ENCODE measurements at regions of chr14 and their contacts with region 1.

Region 1: DNA sequence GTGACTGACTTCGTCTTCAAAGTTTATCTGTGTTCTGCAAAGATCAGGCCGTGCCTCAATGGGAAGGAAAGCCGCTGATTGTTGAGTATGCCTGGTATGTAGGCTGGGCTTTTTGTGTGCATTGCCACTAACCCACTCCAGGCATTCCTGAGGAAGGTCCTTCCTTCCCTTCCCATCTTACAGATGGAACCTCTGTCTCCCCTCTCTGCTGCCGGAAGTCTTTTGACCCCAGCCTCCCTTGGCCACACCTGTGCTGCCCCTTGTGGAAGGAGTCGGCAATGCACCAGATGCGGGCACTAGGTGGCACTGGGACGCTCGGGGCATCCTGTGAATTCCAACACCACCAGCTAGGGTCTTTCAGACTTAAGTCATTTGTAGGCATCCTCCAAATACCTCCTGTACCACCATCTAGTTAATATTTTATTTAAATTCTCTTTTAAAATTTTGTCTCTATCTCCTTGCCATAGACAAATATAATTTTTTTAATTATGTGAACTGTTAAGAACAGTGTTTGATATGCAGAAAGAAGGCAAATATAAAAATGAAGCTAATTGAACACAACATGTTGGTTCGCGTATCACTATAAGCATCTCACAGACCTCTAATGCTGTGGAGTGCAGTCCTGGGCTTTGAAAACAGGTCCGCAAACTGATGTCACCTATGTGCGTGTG is 99.5 kb downstream of the RIN3 start:
- DNase-seq: peak; percentile 35 to 82 (median 72)
- ATAC-seq: peak; percentile 30
- H3K4me3 ChIP-seq: no peak overlapping the region
- H3K4me3 Mint-ChIP-seq: no peak overlapping the region
- H3K27ac ChIP-seq: no peak overlapping the region
- H3K27ac Mint-ChIP-seq: peak overlapping the region; percentile 49
- H3K4me1 ChIP-seq: peaks cover 50% of the 10 kb centered on the region
- H3K4me1 Mint-ChIP-seq: peaks cover 66% of the 10 kb centered on the region
- H3K27me3 ChIP-seq: no peaks in the 10 kb centered on the region
- H3K27me3 Mint-ChIP-seq: no peaks in the 10 kb centered on the region
- CTCF ChIP-seq: peak; percentile 94

Region 2: GRCh38 chr14:92236243-92236900 is 376.8 kb before region 1 on chr14:
- CTCF ChIA-PET with region 1: no interaction called
- POLR2A ChIA-PET with region 1: no interaction called
- intact Hi-C with region 1: no loop called
- DNase-seq: no peak
- ATAC-seq: no peak
- H3K4me3 ChIP-seq: no peak overlapping the region
- H3K4me3 Mint-ChIP-seq: no peak overlapping the region
- H3K27ac ChIP-seq: no peak overlapping the region
- H3K27ac Mint-ChIP-seq: no peak overlapping the region
- H3K4me1 ChIP-seq: no peaks in the 10 kb centered on the region
- H3K4me1 Mint-ChIP-seq: no peaks in the 10 kb centered on the region
- H3K27me3 ChIP-seq: no peaks in the 10 kb centered on the region
- H3K27me3 Mint-ChIP-seq: peaks cover 18% of the 10 kb centered on the region
- CTCF ChIP-seq: no peak

Region 3: DNA sequence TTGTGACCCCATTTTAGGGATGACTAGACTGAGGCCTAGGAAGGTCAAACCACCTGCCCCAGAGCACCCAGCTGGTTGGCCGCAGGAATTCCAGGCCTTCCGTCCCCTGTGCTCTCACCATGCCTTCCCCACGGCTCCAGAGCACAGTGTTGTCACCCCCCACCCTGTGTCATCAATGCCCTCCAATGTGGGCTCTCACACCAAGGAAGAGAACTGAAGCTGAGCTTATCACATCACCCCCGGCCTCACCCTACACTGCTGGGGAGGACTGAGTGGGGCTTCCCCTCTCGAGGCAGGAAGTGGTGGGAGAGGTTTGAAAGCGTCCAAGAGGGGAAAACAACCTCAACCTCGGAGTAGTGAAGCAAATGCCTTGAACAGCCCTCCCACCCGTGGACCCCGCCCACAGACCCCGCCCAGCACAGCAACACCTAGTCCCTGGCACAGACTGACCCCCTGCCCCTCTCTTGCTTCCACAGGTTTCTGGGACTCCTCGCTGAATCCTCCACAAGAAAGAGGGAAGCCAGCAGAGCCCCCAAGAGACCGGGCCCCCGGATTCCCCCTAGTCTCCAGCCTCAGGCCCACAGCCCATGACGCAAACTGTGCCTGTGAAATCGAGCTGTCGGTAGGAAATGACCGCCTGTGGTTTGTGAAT is 38.1 kb after region 1 on chr14:
- CTCF ChIA-PET with region 1: interaction called, 31 read pairs
- POLR2A ChIA-PET with region 1: interaction called, 43 read pairs
- intact Hi-C with region 1: loop called (anchors 1 kb)
- DNase-seq: peak; percentile 56 to 96 (median 84)
- ATAC-seq: peak; percentile 82
- H3K4me3 ChIP-seq: peak overlapping the region; percentile 77 to 91
- H3K4me3 Mint-ChIP-seq: peak overlapping the region; percentile 98
- H3K27ac ChIP-seq: peak overlapping the region; percentile 77 to 95
- H3K27ac Mint-ChIP-seq: peak overlapping the region; percentile 100
- H3K4me1 ChIP-seq: peaks cover 61% of the 10 kb centered on the region
- H3K4me1 Mint-ChIP-seq: peaks cover 76% of the 10 kb centered on the region
- H3K27me3 ChIP-seq: no peaks in the 10 kb centered on the region
- H3K27me3 Mint-ChIP-seq: no peaks in the 10 kb centered on the region
- CTCF ChIP-seq: no peak

Region 4: DNA sequence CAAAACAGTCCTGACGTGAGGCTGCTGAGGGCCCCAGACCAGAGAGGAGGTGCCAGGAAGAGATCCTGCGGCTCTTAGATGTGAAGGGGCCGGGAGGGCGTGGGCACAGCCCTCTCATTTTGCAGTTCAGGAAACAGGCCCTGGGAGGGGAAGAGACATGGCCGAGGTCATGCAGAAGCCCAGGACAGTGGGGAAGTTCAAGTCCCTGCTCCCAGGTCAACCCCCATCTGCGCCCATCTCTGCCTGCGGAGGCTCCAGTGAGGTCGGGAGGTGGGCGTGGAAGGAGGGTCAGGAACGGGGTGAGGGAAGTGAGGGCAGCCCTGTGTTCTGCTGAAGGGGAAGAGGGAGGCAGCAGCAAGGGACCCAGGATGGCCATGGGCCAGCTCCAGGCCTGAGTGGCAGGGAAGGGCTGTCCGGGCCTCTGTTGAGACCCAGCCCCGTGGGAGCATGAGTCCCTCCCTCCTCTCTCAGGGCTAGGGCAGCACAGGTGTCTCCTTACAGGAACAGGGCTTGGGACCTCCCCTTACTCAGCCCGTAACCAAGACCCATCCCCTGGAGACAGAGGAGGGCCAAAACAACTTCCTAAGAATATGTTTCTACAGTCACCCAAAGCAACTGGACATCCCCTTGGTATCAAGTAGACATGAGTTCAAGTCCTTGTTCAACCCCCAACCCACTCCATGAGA is 44.5 kb after region 1 on chr14:
- CTCF ChIA-PET with region 1: interaction called, 31 read pairs
- POLR2A ChIA-PET with region 1: interaction called, 43 read pairs
- intact Hi-C with region 1: no loop called
- DNase-seq: peak in 1 of 9 experiments; percentile 33
- ATAC-seq: no peak
- H3K4me3 ChIP-seq: peak overlapping the region in 1 of 2 experiments; percentile 33
- H3K4me3 Mint-ChIP-seq: peak overlapping the region; percentile 98
- H3K27ac ChIP-seq: peak overlapping the region; percentile 35 to 53
- H3K27ac Mint-ChIP-seq: peak overlapping the region; percentile 94
- H3K4me1 ChIP-seq: peaks cover 71% of the 10 kb centered on the region
- H3K4me1 Mint-ChIP-seq: peaks cover 85% of the 10 kb centered on the region
- H3K27me3 ChIP-seq: no peaks in the 10 kb centered on the region
- H3K27me3 Mint-ChIP-seq: no peaks in the 10 kb centered on the region
- CTCF ChIP-seq: no peak

Region 5: GRCh38 chr14:92670160-92670559 is 57.0 kb after region 1 on chr14:
- CTCF ChIA-PET with region 1: interaction called, 32 read pairs
- POLR2A ChIA-PET with region 1: interaction called, 5 read pairs
- intact Hi-C with region 1: no loop called
- DNase-seq: no peak
- ATAC-seq: no peak
- H3K4me3 ChIP-seq: no peak overlapping the region
- H3K4me3 Mint-ChIP-seq: no peak overlapping the region
- H3K27ac ChIP-seq: peak overlapping the region in 1 of 2 experiments; percentile 22
- H3K27ac Mint-ChIP-seq: peak overlapping the region; percentile 86
- H3K4me1 ChIP-seq: peaks cover 78% of the 10 kb centered on the region
- H3K4me1 Mint-ChIP-seq: peaks cover 78% of the 10 kb centered on the region
- H3K27me3 ChIP-seq: no peaks in the 10 kb centered on the region
- H3K27me3 Mint-ChIP-seq: no peaks in the 10 kb centered on the region
- CTCF ChIP-seq: no peak

Region 6: GRCh38 chr14:92686900-92687444 is 73.8 kb after region 1 on chr14:
- CTCF ChIA-PET with region 1: interaction called, 55 read pairs
- POLR2A ChIA-PET with region 1: no interaction called
- intact Hi-C with region 1: no loop called
- DNase-seq: peak; percentile 16 to 87 (median 49)
- ATAC-seq: peak; percentile 89
- H3K4me3 ChIP-seq: no peak overlapping the region
- H3K4me3 Mint-ChIP-seq: no peak overlapping the region
- H3K27ac ChIP-seq: no peak overlapping the region
- H3K27ac Mint-ChIP-seq: peak overlapping the region; percentile 57
- H3K4me1 ChIP-seq: peaks cover 2% of the 10 kb centered on the region
- H3K4me1 Mint-ChIP-seq: peaks cover 6% of the 10 kb centered on the region
- H3K27me3 ChIP-seq: no peaks in the 10 kb centered on the region
- H3K27me3 Mint-ChIP-seq: no peaks in the 10 kb centered on the region
- CTCF ChIP-seq: peak; percentile 92

Region 7: DNA sequence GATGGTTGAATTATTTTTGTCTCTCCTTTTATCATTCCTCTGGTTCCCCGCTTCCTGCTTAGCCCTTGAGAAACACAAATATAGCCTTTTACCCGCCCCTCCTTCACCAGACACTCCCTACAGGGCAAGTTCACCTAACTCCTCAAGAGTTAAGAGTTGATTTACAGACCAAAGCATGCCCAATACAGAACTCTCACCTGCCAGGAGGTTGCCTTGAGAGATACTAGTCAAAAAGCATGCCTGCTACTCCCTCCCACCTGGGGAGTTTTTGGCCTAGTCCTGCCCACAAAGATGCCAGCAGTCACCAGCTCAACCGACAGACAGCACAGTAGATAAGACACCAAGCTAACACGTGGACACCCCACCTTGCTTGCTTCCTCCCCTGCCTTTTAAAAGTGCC is 124.1 kb after region 1 on chr14:
- CTCF ChIA-PET with region 1: no interaction called
- POLR2A ChIA-PET with region 1: no interaction called
- intact Hi-C with region 1: no loop called
- DNase-seq: peak in 4 of 9 experiments; percentile 33 to 60 (median 43)
- ATAC-seq: peak; percentile 94
- H3K4me3 ChIP-seq: no peak overlapping the region
- H3K4me3 Mint-ChIP-seq: peak overlapping the region; percentile 51
- H3K27ac ChIP-seq: peak overlapping the region in 1 of 2 experiments; percentile 25
- H3K27ac Mint-ChIP-seq: peak overlapping the region; percentile 83
- H3K4me1 ChIP-seq: peaks cover 17% of the 10 kb centered on the region
- H3K4me1 Mint-ChIP-seq: peaks cover 14% of the 10 kb centered on the region
- H3K27me3 ChIP-seq: no peaks in the 10 kb centered on the region
- H3K27me3 Mint-ChIP-seq: no peaks in the 10 kb centered on the region
- CTCF ChIP-seq: no peak

Region 8: GRCh38 chr14:94110552-94111181 is 1497.5 kb after region 1 on chr14 and contains the start of gene IFI27:
- CTCF ChIA-PET with region 1: no interaction called
- POLR2A ChIA-PET with region 1: no interaction called
- intact Hi-C with region 1: no loop called
- DNase-seq: peak in 1 of 9 experiments; percentile 17
- ATAC-seq: no peak
- H3K4me3 ChIP-seq: no peak within 1 kb of the TSS
- H3K4me3 Mint-ChIP-seq: no peak within 1 kb of the TSS
- H3K27ac ChIP-seq: no peak within 1 kb of the TSS
- H3K27ac Mint-ChIP-seq: no peak within 1 kb of the TSS
- H3K4me1 ChIP-seq: no peaks in the 10 kb centered on the region
- H3K4me1 Mint-ChIP-seq: no peaks in the 10 kb centered on the region
- H3K27me3 ChIP-seq: no peaks in the 10 kb centered on the region
- H3K27me3 Mint-ChIP-seq: peaks cover 16% of the 10 kb centered on the region
- CTCF ChIP-seq: no peak
- total RNA-seq, gene IFI27: 0.92 to 0.95 TPM

Measured in CD8-positive, alpha-beta T cell (primary cell).